ENCODE measurements at regions of chr12 and their contacts with region 1.

Region 1: DNA sequence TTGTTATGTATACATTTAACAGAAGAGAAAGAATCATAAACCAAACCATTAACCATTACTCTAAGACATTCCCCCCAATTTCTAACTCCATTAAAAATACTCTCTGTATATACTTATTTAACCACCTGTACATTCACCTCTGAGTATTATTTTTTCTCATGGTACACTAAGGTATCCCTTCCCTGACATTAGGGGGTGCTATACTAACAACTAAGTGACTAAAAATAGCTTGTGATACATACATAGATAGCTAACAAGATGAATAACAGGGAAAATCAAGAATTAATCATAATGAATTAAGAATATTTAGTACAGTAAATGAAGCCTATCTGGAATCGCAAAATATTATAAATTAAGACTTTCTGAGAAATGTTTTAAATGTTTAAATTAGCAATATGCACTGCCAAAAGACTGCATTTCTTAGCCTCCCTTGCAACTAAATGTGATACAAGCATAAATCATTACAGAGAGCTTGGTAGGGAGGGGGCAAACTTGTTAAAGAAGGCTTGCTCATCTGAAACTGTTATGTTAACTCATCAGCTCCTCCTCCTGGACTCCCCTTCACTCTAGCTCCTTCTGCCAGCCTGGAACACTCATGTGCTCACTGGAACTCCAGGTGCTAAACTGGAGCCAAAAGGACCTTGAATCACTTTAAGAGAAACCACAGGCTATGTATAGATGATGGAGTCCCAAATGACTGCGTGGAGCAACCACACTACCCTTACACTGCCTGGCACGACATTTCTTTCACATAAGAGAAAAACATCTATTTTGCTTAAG is 14.9 kb downstream of the C2CD5 start:
- DNase-seq: no peak
- H3K4me3 Mint-ChIP-seq: no peak overlapping the region
- H3K27ac Mint-ChIP-seq: no peak overlapping the region
- H3K4me1 Mint-ChIP-seq: peaks cover 5% of the 10 kb centered on the region
- H3K27me3 Mint-ChIP-seq: no peaks in the 10 kb centered on the region

Region 2: DNA sequence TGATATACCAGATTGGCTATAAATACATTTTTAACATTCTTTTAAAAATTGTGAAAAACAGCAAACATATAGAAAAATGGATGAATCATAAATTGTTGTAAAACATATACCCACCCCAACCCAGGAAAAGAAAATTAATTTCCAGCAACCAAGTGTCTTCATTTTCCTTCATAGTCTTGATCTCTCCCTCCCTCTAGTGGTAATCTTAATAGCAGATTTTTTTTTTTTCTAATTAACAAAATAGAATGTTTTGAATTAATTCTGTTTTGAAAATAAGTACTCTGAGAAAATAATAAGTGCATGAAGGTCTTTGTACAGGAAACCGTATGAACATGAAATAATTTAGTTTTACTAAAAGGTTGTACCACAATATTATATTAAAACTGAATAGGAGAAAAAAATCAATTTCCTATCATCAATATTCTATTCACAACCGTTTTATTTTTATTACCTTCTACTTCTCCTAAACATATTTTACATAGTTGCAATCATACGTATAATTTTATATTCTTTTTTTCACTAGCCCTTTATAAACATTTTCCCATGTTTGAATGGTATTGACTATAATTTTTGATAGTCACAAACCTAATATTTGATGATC is 102.5 kb after region 1 on chr12:
- CTCF ChIA-PET with region 1: interaction called, 10 read pairs
- intact Hi-C with region 1: loop called (anchors 1 kb)
- DNase-seq: no peak
- H3K4me3 Mint-ChIP-seq: no peak overlapping the region
- H3K27ac Mint-ChIP-seq: no peak overlapping the region
- H3K4me1 Mint-ChIP-seq: peaks cover 61% of the 10 kb centered on the region
- H3K27me3 Mint-ChIP-seq: no peaks in the 10 kb centered on the region

Region 3: GRCh38 chr12:22670762-22671161 is 141.3 kb after region 1 on chr12:
- CTCF ChIA-PET with region 1: interaction called, 29 read pairs
- intact Hi-C with region 1: loop called (anchors 1 kb)
- DNase-seq: no peak
- H3K4me3 Mint-ChIP-seq: no peak overlapping the region
- H3K27ac Mint-ChIP-seq: no peak overlapping the region
- H3K4me1 Mint-ChIP-seq: no peaks in the 10 kb centered on the region
- H3K27me3 Mint-ChIP-seq: no peaks in the 10 kb centered on the region

Region 4: GRCh38 chr12:23211384-23212320 is 682.2 kb after region 1 on chr12:
- CTCF ChIA-PET with region 1: no interaction called
- intact Hi-C with region 1: no loop called
- DNase-seq: no peak
- H3K4me3 Mint-ChIP-seq: no peak overlapping the region
- H3K27ac Mint-ChIP-seq: no peak overlapping the region
- H3K4me1 Mint-ChIP-seq: no peaks in the 10 kb centered on the region
- H3K27me3 Mint-ChIP-seq: no peaks in the 10 kb centered on the region